ENCODE measurements at regions of chr19 and their contacts with region 1.

Region 1: DNA sequence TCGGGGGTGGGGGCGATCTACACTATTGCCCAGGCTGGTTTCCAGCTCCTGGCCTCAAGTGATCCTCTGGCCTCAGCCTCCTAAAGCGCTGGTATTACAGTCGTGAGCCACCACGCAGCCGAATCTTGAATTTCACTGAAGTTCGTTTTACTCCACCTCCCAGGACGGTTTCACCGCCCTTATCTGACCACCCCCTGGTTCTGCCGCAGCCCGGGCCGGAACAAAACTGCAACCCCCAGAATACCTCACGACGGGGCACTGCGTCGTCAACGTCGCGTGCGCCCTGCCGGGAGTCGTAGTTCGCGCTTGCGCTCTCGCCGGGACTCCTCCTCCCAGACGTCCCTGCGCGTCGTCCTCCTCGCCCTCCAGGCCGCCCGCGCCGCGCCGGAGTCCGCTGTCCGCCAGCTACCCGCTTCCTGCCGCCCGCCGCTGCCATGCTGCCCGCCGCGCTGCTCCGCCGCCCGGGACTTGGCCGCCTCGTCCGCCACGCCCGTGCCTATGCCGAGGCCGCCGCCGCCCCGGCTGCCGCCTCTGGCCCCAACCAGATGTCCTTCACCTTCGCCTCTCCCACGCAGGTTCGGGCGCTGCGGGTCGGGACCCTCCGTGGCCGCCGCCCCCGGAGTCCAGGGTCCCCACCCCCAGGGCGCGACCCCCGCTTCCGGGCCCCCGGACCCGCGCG is at the start of gene ATP5F1D:
- DNase-seq: peak; percentile 94
- H3K4me3 Mint-ChIP-seq: peak within 1 kb of the TSS; percentile 84
- H3K27ac Mint-ChIP-seq: peak within 1 kb of the TSS; percentile 86
- H3K4me1 Mint-ChIP-seq: peaks cover 43% of the 10 kb centered on the region
- H3K27me3 Mint-ChIP-seq: peaks cover 10% of the 10 kb centered on the region
- total RNA-seq, gene ATP5F1D: 153 TPM

Region 2: GRCh38 chr19:920051-920864 is 321.3 kb before region 1 on chr19:
- CTCF ChIA-PET with region 1: interaction called, 4 read pairs
- intact Hi-C with region 1: loop called (anchors 2 kb)
- DNase-seq: peak; percentile 63
- H3K4me3 Mint-ChIP-seq: peak overlapping the region; percentile 74
- H3K27ac Mint-ChIP-seq: peak overlapping the region; percentile 73
- H3K4me1 Mint-ChIP-seq: peaks cover 22% of the 10 kb centered on the region
- H3K27me3 Mint-ChIP-seq: peaks cover 2% of the 10 kb centered on the region

Region 3: DNA sequence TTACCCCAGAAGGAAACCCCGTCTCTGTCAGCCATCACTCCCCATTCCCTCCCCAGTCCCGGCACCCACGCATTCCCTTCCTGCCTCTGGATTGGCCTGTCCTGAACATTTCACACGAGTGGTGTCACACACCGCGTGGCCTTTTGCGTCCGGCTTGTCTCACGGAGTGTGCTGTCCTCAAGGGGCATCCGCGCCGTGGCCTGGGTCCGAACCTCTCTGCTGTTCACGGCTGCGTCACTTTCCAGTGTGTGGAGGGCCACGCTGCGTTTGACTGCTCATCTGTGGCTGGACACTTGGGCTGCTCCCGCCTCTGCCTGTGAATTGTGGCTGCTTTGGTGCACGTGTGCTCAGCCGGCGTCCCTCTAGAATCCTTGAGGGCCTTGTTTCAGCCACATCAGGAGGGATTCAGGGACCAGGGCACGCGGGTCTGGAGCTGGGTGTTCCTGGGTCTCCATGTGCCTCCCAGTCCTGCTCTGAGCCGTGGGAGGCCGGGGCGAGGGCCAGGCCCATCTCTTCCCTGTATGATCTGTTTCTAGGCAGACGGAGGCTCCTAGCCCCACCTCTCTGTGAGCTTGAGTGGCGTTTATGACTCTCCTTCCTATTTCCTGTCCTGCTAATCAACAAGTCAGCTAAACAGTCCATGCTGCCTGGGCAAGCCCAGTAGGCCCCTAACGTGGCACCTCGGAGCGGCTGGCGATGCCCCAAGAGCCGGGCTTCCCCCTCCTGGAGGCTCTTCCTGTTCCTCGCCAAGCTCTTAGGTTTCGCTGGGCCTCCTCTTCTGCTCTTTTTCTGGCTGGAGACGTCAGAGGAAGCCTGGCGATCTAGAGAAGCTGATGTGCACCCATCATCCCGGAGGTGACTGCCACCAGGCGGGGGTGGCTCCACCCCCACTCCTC is 27.9 kb before region 1 on chr19:
- CTCF ChIA-PET with region 1: interaction called, 4 read pairs
- intact Hi-C with region 1: loop called (anchors 2 kb)
- DNase-seq: peak; percentile 89
- H3K4me3 Mint-ChIP-seq: peak overlapping the region; percentile 79
- H3K27ac Mint-ChIP-seq: peak overlapping the region; percentile 98
- H3K4me1 Mint-ChIP-seq: peaks cover 41% of the 10 kb centered on the region
- H3K27me3 Mint-ChIP-seq: no peaks in the 10 kb centered on the region

Region 4: DNA sequence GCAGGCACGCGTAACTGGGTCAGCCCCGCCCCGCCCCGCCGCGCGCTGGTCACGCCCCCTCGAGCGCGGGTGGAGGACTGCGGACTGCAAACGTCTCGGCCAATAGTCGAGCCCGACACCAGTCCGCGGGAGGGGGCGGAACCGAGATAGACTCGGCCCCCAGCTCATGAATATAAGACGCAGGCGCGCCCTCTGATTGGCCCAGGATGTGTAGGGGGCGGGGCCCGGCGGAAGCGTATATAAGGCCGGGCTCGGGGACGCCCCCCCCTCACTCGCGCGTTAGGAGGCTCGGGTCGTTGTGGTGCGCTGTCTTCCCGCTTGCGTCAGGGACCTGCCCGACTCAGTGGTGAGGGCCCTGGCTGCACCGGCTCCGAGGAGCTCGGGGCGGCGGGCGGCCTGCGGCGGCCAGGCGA is 27.5 kb after region 1 on chr19 and contains the start of gene CIRBP:
- CTCF ChIA-PET with region 1: interaction called, 233 read pairs
- intact Hi-C with region 1: loop called (anchors 1 kb)
- DNase-seq: peak; percentile 99
- H3K4me3 Mint-ChIP-seq: peak within 1 kb of the TSS; percentile 87
- H3K27ac Mint-ChIP-seq: peak within 1 kb of the TSS; percentile 83
- H3K4me1 Mint-ChIP-seq: peaks cover 64% of the 10 kb centered on the region
- H3K27me3 Mint-ChIP-seq: no peaks in the 10 kb centered on the region
- total RNA-seq, gene CIRBP: 167 to 183 TPM

Region 5: GRCh38 chr19:1295169-1296012 is 53.8 kb after region 1 on chr19:
- CTCF ChIA-PET with region 1: no interaction called
- intact Hi-C with region 1: no loop called
- DNase-seq: no peak
- H3K4me3 Mint-ChIP-seq: no peak overlapping the region
- H3K27ac Mint-ChIP-seq: no peak overlapping the region
- H3K4me1 Mint-ChIP-seq: peaks cover 7% of the 10 kb centered on the region
- H3K27me3 Mint-ChIP-seq: peaks cover 18% of the 10 kb centered on the region

Measured in activated naive CD4-positive, alpha-beta T cell treated with anti-CD3 and anti-CD28 coated beads for 36 hours (primary cell).